Endothelial cell of umbilical vein (primary cell): ENCODE measurements at regions of chr1 and their contacts with region 1.

Region 1: GRCh38 chr1:164786980-164787833 is 228.2 kb downstream of the PBX1 start:
- DNase-seq: peak; percentile 70
- H3K4me3 ChIP-seq: no peak overlapping the region
- H3K27ac ChIP-seq: no peak overlapping the region
- H3K4me1 ChIP-seq: no peaks in the 10 kb centered on the region
- H3K27me3 ChIP-seq: no peaks in the 10 kb centered on the region
- CTCF ChIP-seq: peak; percentile 92
- POLR2A ChIP-seq: no peak

Region 2: GRCh38 chr1:163361123-163361934 is 1425.9 kb before region 1 on chr1:
- CTCF ChIA-PET with region 1: interaction called, 12 read pairs
- POLR2A ChIA-PET with region 1: no interaction called
- dilution Hi-C with region 1: no loop called
- intact Hi-C with region 1: no loop called
- DNase-seq: no peak
- H3K4me3 ChIP-seq: no peak overlapping the region
- H3K27ac ChIP-seq: no peak overlapping the region
- H3K4me1 ChIP-seq: no peaks in the 10 kb centered on the region
- H3K27me3 ChIP-seq: peaks cover 5% of the 10 kb centered on the region in 2 experiments
- CTCF ChIP-seq: no peak
- POLR2A ChIP-seq: no peak

Region 3: GRCh38 chr1:163535807-163536206 is 1251.4 kb before region 1 on chr1:
- CTCF ChIA-PET with region 1: interaction called, 11 read pairs
- POLR2A ChIA-PET with region 1: no interaction called
- dilution Hi-C with region 1: no loop called
- intact Hi-C with region 1: no loop called
- DNase-seq: peak; percentile 30
- H3K4me3 ChIP-seq: no peak overlapping the region
- H3K27ac ChIP-seq: no peak overlapping the region
- H3K4me1 ChIP-seq: no peaks in the 10 kb centered on the region
- H3K27me3 ChIP-seq: peaks cover 0 to 3% of the 10 kb centered on the region in 2 experiments
- CTCF ChIP-seq: no peak
- POLR2A ChIP-seq: no peak

Region 4: DNA sequence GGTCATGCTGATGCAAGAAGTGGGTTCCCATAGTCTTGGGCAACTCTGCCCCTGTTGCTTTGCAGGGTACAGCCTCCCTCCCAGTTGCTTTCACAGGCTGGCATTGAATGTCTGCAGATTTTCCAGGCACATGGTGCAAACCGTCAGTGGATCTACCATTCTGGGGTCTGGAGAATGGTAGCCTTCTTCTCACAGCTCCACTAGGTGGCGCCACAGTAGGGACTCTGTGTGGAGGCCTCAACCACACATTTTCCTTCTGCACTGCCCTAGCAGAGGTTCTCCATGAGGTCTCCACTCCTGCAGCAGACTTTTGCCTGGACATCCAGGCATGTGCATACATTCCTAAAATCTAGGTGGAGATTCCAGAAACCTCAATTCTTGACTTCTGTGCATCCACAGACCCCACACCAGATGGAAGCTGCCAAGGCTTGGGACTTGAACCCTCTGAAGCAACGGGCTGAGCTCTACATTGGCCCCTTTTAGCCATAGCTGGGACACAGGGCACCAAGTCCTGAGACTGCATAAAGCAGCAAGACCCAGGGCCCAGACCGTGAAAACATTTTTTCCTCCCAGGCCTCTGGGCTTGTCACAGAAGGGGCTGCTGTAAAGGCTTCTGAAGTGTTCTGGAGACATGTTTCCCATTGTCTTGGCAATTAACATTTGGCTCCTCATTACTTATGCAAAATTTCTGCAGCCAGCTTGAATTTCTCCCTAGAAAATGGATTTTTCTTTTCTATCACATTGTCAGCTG is 694.4 kb before region 1 on chr1:
- CTCF ChIA-PET with region 1: interaction called, 4 read pairs
- POLR2A ChIA-PET with region 1: no interaction called
- dilution Hi-C with region 1: no loop called
- intact Hi-C with region 1: loop called (anchors 1 kb)
- DNase-seq: no peak
- H3K4me3 ChIP-seq: no peak overlapping the region
- H3K27ac ChIP-seq: no peak overlapping the region
- H3K4me1 ChIP-seq: no peaks in the 10 kb centered on the region
- H3K27me3 ChIP-seq: no peaks in the 10 kb centered on the region
- CTCF ChIP-seq: peak; percentile 9 to 33
- POLR2A ChIP-seq: no peak

Region 5: GRCh38 chr1:164510435-164510834 is 276.8 kb before region 1 on chr1:
- CTCF ChIA-PET with region 1: interaction called, 4 read pairs
- POLR2A ChIA-PET with region 1: no interaction called
- dilution Hi-C with region 1: no loop called
- intact Hi-C with region 1: loop called (anchors 5 kb)
- DNase-seq: peak; percentile 15
- H3K4me3 ChIP-seq: no peak overlapping the region
- H3K27ac ChIP-seq: no peak overlapping the region
- H3K4me1 ChIP-seq: no peaks in the 10 kb centered on the region
- H3K27me3 ChIP-seq: no peaks in the 10 kb centered on the region
- CTCF ChIP-seq: no peak
- POLR2A ChIP-seq: no peak

Region 6: GRCh38 chr1:164625001-164625617 is 162.1 kb before region 1 on chr1:
- CTCF ChIA-PET with region 1: interaction called, 14 read pairs
- POLR2A ChIA-PET with region 1: no interaction called
- dilution Hi-C with region 1: no loop called
- intact Hi-C with region 1: no loop called
- DNase-seq: peak; percentile 43
- H3K4me3 ChIP-seq: no peak overlapping the region
- H3K27ac ChIP-seq: no peak overlapping the region
- H3K4me1 ChIP-seq: no peaks in the 10 kb centered on the region
- H3K27me3 ChIP-seq: no peaks in the 10 kb centered on the region
- CTCF ChIP-seq: peak; percentile 23 to 42
- POLR2A ChIP-seq: no peak

Region 7: GRCh38 chr1:165259706-165260428 is 472.7 kb after region 1 on chr1:
- CTCF ChIA-PET with region 1: no interaction called
- POLR2A ChIA-PET with region 1: no interaction called
- dilution Hi-C with region 1: no loop called
- intact Hi-C with region 1: no loop called
- DNase-seq: no peak
- H3K4me3 ChIP-seq: no peak overlapping the region
- H3K27ac ChIP-seq: no peak overlapping the region
- H3K4me1 ChIP-seq: no peaks in the 10 kb centered on the region
- H3K27me3 ChIP-seq: no peaks in the 10 kb centered on the region
- CTCF ChIP-seq: no peak
- POLR2A ChIP-seq: no peak